Left ventricle myocardium inferior (tissue), 1 donor: ENCODE measurements at regions of chr10 and their contacts with region 1.

Region 1: GRCh38 chr10:77641788-77642397 is 4.3 kb upstream of the KCNMA1 start:
- DNase-seq: no peak
- H3K4me3 ChIP-seq: no peak overlapping the region
- H3K27ac ChIP-seq: no peak overlapping the region
- H3K4me1 ChIP-seq: peaks cover 7% of the 10 kb centered on the region
- H3K27me3 ChIP-seq: peaks cover 85% of the 10 kb centered on the region
- CTCF ChIP-seq: peak; percentile 84

Region 2: DNA sequence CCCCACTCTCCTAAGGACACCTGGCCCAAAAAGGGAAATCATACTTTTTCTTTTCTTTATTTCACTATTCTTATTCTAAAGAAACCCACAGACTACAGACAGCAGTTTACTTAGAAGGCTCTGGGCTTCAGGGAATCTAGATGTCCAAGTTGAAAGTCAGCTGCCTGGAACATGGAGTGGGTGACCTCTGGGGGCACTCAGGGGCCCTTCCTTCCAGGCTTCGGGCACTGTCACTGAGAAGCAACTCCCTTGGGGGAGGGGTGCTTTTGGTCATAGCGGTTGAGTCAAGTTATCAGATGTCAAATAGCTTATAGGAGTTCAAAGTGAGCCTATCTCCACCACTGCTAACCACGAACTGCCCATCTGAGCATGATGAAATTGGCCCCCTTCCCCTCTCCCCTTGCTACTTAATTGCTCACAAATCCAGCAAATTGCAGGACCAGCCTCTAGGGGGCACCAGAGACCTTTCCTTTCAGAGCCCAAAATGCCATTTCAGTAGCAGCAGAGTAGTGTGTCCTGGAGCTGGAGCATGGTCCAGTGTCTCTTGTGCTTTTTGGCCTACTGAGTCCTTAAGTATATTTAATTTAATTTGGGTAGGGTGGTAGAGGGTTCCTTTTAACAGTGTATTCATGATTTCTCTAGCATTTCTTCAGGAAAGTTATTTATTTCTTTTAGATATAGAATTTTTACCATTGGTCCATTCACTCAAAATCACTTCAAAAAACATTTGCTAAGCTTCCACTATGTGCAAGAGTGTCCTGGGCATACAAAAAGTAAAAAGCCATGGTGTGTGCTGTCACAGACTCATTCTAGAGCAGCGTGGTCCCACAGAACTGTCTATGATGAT is 468.1 kb before region 1 on chr10:
- intact Hi-C with region 1: loop called (anchors 5 kb)
- DNase-seq: peak; percentile 60
- H3K4me3 ChIP-seq: no peak overlapping the region
- H3K27ac ChIP-seq: no peak overlapping the region
- H3K4me1 ChIP-seq: no peaks in the 10 kb centered on the region
- H3K27me3 ChIP-seq: peaks cover 62% of the 10 kb centered on the region
- CTCF ChIP-seq: peak; percentile 92

Region 3: GRCh38 chr10:77386838-77387237 is 255.1 kb before region 1 on chr10:
- intact Hi-C with region 1: loop called (anchors 5 kb)
- DNase-seq: no peak
- H3K4me3 ChIP-seq: no peak overlapping the region
- H3K27ac ChIP-seq: no peak overlapping the region
- H3K4me1 ChIP-seq: peaks cover 18% of the 10 kb centered on the region
- H3K27me3 ChIP-seq: peaks cover 31% of the 10 kb centered on the region
- CTCF ChIP-seq: no peak